ENCODE measurements at regions of chr2 and their contacts with region 1.

Region 1: DNA sequence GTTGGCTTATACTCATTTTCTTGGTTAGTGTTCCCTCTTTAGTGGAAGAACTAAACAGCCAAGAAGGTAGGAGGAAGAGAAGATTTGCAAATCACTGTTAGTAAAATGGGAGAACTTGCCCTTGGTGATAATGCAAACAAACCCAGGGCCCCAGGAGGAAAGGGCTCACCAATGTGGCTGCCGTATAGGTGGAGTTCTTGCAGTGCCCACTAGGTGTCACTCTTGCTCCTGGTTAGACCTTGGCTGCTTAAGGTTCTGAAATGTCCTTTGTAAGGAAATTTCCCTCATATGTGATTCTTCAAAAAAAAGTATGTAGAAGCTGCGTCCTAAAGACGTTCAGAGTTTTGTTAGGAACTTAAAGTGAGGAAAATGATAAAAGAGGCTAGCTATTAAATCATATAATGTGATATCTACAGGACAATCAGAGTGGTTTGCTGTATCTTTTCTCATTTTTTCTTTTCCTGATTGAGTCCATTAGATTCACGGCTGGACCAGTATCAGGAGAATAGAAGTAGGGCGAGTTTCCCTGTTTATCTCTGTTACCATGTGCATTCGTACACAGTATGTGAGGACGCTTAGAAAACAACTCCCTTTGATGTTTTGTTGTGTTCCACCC is 48.6 kb downstream of the RPIA start:
- DNase-seq: peak; percentile 40 to 80 (median 67)
- ATAC-seq: peak; percentile 95
- H3K4me3 ChIP-seq: no peak overlapping the region
- H3K4me3 Mint-ChIP-seq: peak overlapping the region in 4 of 10 donors; percentile 8 to 43 (median 25)
- H3K27ac ChIP-seq: no peak overlapping the region
- H3K27ac Mint-ChIP-seq: peak overlapping the region in 6 of 9 donors; percentile 66 to 84 (median 71)
- H3K4me1 ChIP-seq: peaks cover 0 to 5% of the 10 kb centered on the region in 2 donors
- H3K4me1 Mint-ChIP-seq: peaks cover 4 to 37% (median 30%) of the 10 kb centered on the region in 7 donors
- H3K27me3 ChIP-seq: no peaks in the 10 kb centered on the region
- H3K27me3 Mint-ChIP-seq: no peaks in the 10 kb centered on the region

Region 2: GRCh38 chr2:88669371-88670214 is 70.5 kb before region 1 on chr2:
- CTCF ChIA-PET with region 1: no interaction called
- POLR2A ChIA-PET with region 1: no interaction called
- intact Hi-C with region 1: no loop called
- DNase-seq: peak in 2 of 9 donors; percentile 11 to 18
- ATAC-seq: peak; percentile 73
- H3K4me3 ChIP-seq: no peak overlapping the region
- H3K4me3 Mint-ChIP-seq: no peak overlapping the region
- H3K27ac ChIP-seq: no peak overlapping the region
- H3K27ac Mint-ChIP-seq: no peak overlapping the region
- H3K4me1 ChIP-seq: no peaks in the 10 kb centered on the region
- H3K4me1 Mint-ChIP-seq: peaks cover 0 to 6% (median 0%) of the 10 kb centered on the region in 7 donors
- H3K27me3 ChIP-seq: no peaks in the 10 kb centered on the region
- H3K27me3 Mint-ChIP-seq: peaks cover 0 to 5% (median 0%) of the 10 kb centered on the region in 5 donors

Region 3: GRCh38 chr2:88765154-88765900 is 25.2 kb after region 1 on chr2:
- CTCF ChIA-PET with region 1: interaction called, 5 read pairs
- POLR2A ChIA-PET with region 1: interaction called, 3 read pairs
- intact Hi-C with region 1: loop called in 1 of 2 experiments (anchors 1 kb)
- DNase-seq: peak in 8 of 9 donors; percentile 53 to 67 (median 59)
- ATAC-seq: peak; percentile 61
- H3K4me3 ChIP-seq: peak overlapping the region; percentile 51
- H3K4me3 Mint-ChIP-seq: peak overlapping the region; percentile 78 to 94 (median 88)
- H3K27ac ChIP-seq: peak overlapping the region; percentile 61
- H3K27ac Mint-ChIP-seq: peak overlapping the region; percentile 34 to 94 (median 83)
- H3K4me1 ChIP-seq: peaks cover 0 to 8% of the 10 kb centered on the region in 2 donors
- H3K4me1 Mint-ChIP-seq: peaks cover 4 to 40% (median 13%) of the 10 kb centered on the region in 7 donors
- H3K27me3 ChIP-seq: no peaks in the 10 kb centered on the region
- H3K27me3 Mint-ChIP-seq: peaks cover 5 to 38% (median 15%) of the 10 kb centered on the region in 5 donors

Region 4: GRCh38 chr2:88857951-88858411 is 117.9 kb after region 1 on chr2:
- CTCF ChIA-PET with region 1: no interaction called
- POLR2A ChIA-PET with region 1: no interaction called
- intact Hi-C with region 1: no loop called
- DNase-seq: no peak
- ATAC-seq: no peak
- H3K4me3 ChIP-seq: no peak overlapping the region
- H3K4me3 Mint-ChIP-seq: no peak overlapping the region
- H3K27ac ChIP-seq: no peak overlapping the region
- H3K27ac Mint-ChIP-seq: no peak overlapping the region
- H3K4me1 ChIP-seq: no peaks in the 10 kb centered on the region
- H3K4me1 Mint-ChIP-seq: peaks cover 0 to 3% (median 0%) of the 10 kb centered on the region in 7 donors
- H3K27me3 ChIP-seq: peaks cover 0 to 3% of the 10 kb centered on the region in 2 donors
- H3K27me3 Mint-ChIP-seq: peaks cover 0 to 17% (median 13%) of the 10 kb centered on the region in 5 donors

Region 5: DNA sequence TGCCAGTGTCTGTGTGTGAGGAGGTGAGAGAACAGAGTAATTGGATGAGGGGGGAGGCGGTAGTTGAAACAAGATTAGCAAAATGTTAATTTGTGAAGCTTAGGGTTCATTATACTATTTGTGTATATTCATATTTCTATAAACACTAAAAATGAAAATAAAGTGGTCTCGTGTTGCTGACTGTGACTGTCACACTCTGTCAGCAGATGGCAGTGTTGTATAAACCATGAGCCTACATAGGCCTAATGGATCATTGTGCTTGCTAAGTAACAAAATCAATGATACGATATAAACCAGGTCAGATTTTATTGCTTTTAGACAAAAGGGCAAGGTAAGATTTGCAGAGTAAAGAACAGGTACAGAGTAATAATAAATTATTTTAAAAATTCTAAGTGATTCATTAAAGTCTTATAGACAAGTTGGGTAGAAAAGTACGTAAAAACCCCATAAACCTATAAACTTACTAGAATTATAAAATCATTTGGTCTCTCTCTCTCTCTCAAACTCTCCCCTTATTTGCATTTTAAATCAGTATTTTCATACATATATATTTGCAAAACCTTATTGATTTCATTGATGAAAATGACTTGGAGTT is 134.1 kb after region 1 on chr2:
- CTCF ChIA-PET with region 1: interaction called, 9 read pairs
- POLR2A ChIA-PET with region 1: no interaction called
- intact Hi-C with region 1: loop called (anchors 1 to 5 kb)
- DNase-seq: peak in 7 of 9 donors; percentile 21 to 64 (median 54)
- ATAC-seq: peak; percentile 76
- H3K4me3 ChIP-seq: no peak overlapping the region
- H3K4me3 Mint-ChIP-seq: no peak overlapping the region
- H3K27ac ChIP-seq: no peak overlapping the region
- H3K27ac Mint-ChIP-seq: no peak overlapping the region
- H3K4me1 ChIP-seq: no peaks in the 10 kb centered on the region
- H3K4me1 Mint-ChIP-seq: peaks cover 0 to 6% (median 0%) of the 10 kb centered on the region in 7 donors
- H3K27me3 ChIP-seq: no peaks in the 10 kb centered on the region
- H3K27me3 Mint-ChIP-seq: peaks cover 6 to 29% (median 26%) of the 10 kb centered on the region in 5 donors

Region 6: GRCh38 chr2:88933980-88934379 is 193.9 kb after region 1 on chr2:
- CTCF ChIA-PET with region 1: no interaction called
- POLR2A ChIA-PET with region 1: no interaction called
- intact Hi-C with region 1: loop called in 1 of 2 experiments (anchors 5 kb)
- DNase-seq: peak in 7 of 9 donors; percentile 12 to 39 (median 29)
- ATAC-seq: peak; percentile 45
- H3K4me3 ChIP-seq: no peak overlapping the region
- H3K4me3 Mint-ChIP-seq: no peak overlapping the region
- H3K27ac ChIP-seq: no peak overlapping the region
- H3K27ac Mint-ChIP-seq: peak overlapping the region in 1 of 9 donors; percentile 13
- H3K4me1 ChIP-seq: no peaks in the 10 kb centered on the region
- H3K4me1 Mint-ChIP-seq: peaks cover 0 to 8% (median 4%) of the 10 kb centered on the region in 7 donors
- H3K27me3 ChIP-seq: no peaks in the 10 kb centered on the region
- H3K27me3 Mint-ChIP-seq: peaks cover 0 to 9% (median 0%) of the 10 kb centered on the region in 5 donors